GM23248 (cell line): ENCODE measurements at regions of chr10 and their contacts with region 1.

Region 1: GRCh38 chr10:113139699-113140098 is 189.7 kb downstream of the TCF7L2 start:
- DNase-seq: peak; percentile 55
- H3K4me3 ChIP-seq: no peak overlapping the region
- H3K27ac ChIP-seq: no peak overlapping the region
- H3K4me1 ChIP-seq: no peaks in the 10 kb centered on the region
- H3K27me3 ChIP-seq: no peaks in the 10 kb centered on the region

Region 2: GRCh38 chr10:112741830-112742411 is 397.8 kb before region 1 on chr10:
- in situ Hi-C with region 1: no loop called
- DNase-seq: no peak
- H3K4me3 ChIP-seq: no peak overlapping the region
- H3K27ac ChIP-seq: no peak overlapping the region
- H3K4me1 ChIP-seq: peaks cover 7% of the 10 kb centered on the region; the same call in 1 of the 2 replicates
- H3K27me3 ChIP-seq: no peaks in the 10 kb centered on the region

Region 3: DNA sequence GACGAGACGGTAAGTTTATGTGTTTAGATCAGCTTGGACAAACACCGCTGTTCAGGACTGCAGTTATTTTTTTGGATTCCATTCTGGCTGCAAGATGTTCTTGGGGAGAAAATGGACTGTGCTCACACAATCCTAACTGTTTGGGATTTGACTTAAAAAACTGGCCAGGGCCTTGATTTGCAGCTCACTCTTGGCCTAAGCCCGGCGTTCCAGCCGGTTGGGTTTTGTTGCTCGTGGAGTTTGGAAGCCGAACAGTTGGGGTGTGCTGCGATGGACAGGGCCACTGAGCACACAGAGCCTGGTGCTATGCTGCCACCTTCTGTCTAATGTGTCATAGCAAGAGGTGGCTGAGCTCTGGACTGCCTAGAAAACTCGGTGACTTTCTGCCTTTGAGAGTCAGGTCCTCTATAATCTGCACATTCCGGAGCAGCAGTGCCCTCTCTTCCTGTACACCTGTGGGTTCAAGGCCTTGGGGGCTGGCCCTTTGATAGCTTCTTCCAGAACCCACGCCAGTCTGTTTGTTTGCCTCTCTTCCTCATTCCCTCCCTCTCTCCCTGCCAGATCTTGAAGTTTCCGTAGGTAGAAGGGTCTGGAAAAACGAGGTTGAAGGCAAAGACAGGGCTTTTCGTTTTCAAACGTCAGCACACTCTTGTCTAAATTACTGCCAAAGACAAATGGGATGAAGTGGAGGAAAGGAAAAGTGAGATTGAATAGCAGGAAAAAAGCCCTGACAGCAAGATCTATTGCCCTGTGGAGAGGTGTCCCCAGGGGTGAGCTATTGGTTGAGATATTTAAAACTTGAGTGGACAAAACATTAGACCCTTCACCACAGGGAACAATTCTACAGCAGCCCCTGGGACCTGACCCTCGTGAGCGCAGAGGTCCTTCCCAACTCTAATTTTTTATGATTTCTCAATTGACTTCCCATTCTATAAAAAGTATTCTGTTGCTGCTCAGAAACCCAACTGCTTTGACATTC is 245.6 kb after region 1 on chr10:
- in situ Hi-C with region 1: loop called (anchors 10 kb)
- DNase-seq: peak; percentile 94
- H3K4me3 ChIP-seq: peak overlapping the region; percentile 62
- H3K27ac ChIP-seq: peak overlapping the region; percentile 7
- H3K4me1 ChIP-seq: peaks cover 51% of the 10 kb centered on the region
- H3K27me3 ChIP-seq: no peaks in the 10 kb centered on the region

Region 4: GRCh38 chr10:113550365-113550764 is 410.7 kb after region 1 on chr10:
- in situ Hi-C with region 1: no loop called
- DNase-seq: no peak
- H3K4me3 ChIP-seq: no peak overlapping the region
- H3K27ac ChIP-seq: no peak overlapping the region
- H3K4me1 ChIP-seq: no peaks in the 10 kb centered on the region
- H3K27me3 ChIP-seq: no peaks in the 10 kb centered on the region